Activated CD4-positive, alpha-beta memory T cell treated with anti-CD3 and anti-CD28 coated beads for 36 hours (primary cell): ENCODE measurements at regions of chr14 and their contacts with region 1.

Region 1: GRCh38 chr14:106459971-106460730 is 933.8 kb downstream of the TMEM121 start:
- DNase-seq: peak; percentile 82
- H3K4me3 Mint-ChIP-seq: no peak overlapping the region
- H3K27ac Mint-ChIP-seq: peak overlapping the region; percentile 18
- H3K4me1 Mint-ChIP-seq: peaks cover 5% of the 10 kb centered on the region
- H3K27me3 Mint-ChIP-seq: peaks cover 12% of the 10 kb centered on the region

Region 2: DNA sequence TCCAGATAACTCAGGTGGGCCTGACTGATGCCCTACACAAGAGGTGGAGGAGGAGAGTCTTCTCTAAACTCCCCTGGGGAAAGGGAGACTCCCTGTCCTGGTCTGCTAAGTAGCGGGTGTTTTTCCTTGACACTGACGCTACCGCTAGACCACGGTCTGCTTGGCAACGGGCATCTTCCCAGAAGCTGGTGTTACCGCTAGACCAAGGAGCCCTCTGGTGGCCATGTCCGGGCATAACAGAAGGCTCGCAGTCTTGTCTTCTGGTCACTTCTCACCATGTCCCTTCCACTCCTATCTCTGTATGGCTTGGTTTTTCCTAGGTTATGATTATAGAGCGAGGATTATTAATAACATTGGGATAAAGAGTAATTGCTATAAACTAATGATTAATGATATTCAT is 31.7 kb after region 1 on chr14:
- CTCF ChIA-PET with region 1: interaction called, 20 read pairs
- POLR2A ChIA-PET with region 1: no interaction called
- intact Hi-C with region 1: no loop called
- DNase-seq: peak; percentile 50
- H3K4me3 Mint-ChIP-seq: no peak overlapping the region
- H3K27ac Mint-ChIP-seq: no peak overlapping the region
- H3K4me1 Mint-ChIP-seq: peaks cover 21% of the 10 kb centered on the region
- H3K27me3 Mint-ChIP-seq: no peaks in the 10 kb centered on the region

Region 3: GRCh38 chr14:106518054-106518943 is 58.1 kb after region 1 on chr14:
- CTCF ChIA-PET with region 1: interaction called, 24 read pairs
- POLR2A ChIA-PET with region 1: no interaction called
- intact Hi-C with region 1: loop called (anchors 1 kb)
- DNase-seq: peak; percentile 89
- H3K4me3 Mint-ChIP-seq: no peak overlapping the region
- H3K27ac Mint-ChIP-seq: no peak overlapping the region
- H3K4me1 Mint-ChIP-seq: peaks cover 15% of the 10 kb centered on the region
- H3K27me3 Mint-ChIP-seq: peaks cover 10% of the 10 kb centered on the region